ENCODE measurements at regions of chr14 and their contacts with region 1.

Region 1: GRCh38 chr14:89618811-89619551 is 201.9 kb upstream of the FOXN3 start:
- DNase-seq: peak; percentile 71
- H3K4me3 Mint-ChIP-seq: peak overlapping the region; percentile 94
- H3K27ac Mint-ChIP-seq: peak overlapping the region; percentile 97
- H3K4me1 Mint-ChIP-seq: peaks cover 63% of the 10 kb centered on the region
- H3K27me3 Mint-ChIP-seq: no peaks in the 10 kb centered on the region

Region 2: GRCh38 chr14:89178802-89179535 is 440.0 kb before region 1 on chr14:
- intact Hi-C with region 1: loop called (anchors 10 kb)
- DNase-seq: no peak
- H3K4me3 Mint-ChIP-seq: no peak overlapping the region
- H3K27ac Mint-ChIP-seq: no peak overlapping the region
- H3K4me1 Mint-ChIP-seq: peaks cover 4% of the 10 kb centered on the region
- H3K27me3 Mint-ChIP-seq: no peaks in the 10 kb centered on the region

Region 3: DNA sequence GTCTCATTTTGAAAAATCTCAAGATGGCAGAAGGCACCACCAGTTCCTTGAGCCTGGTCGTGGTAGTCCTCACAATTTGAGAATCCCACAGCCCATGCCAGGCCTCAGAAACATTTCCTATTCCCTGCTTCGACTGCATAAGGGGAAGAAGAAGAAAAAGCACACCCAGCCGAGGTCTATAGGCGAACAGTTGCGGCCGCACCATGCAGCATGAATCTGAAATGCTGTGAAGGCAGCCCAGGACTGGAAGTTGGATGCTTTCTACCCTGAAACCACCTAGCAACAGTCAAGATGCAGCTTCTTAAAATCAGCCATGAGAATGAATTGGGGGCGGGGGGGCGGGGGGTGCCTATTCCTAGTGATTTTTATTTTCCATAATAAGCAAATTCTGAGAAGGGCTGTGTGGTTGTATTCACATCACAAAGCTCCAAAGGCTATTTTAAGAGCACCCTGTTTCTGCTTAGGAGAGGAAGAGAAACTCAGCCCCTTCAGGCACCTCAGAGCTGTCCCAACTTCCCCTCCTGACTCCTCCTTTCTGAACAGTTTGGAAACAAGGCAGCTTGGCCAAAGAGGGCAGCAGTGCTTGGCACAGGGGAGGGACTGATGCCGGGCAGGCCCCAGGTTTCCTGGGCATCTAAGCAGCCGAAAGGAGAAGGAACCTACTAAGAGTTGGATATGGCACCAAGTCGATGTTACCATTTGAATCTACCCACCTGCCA is 29.4 kb before region 1 on chr14:
- intact Hi-C with region 1: loop called (anchors 2 kb)
- DNase-seq: no peak
- H3K4me3 Mint-ChIP-seq: no peak overlapping the region
- H3K27ac Mint-ChIP-seq: peak overlapping the region; percentile 36
- H3K4me1 Mint-ChIP-seq: peaks cover 59% of the 10 kb centered on the region
- H3K27me3 Mint-ChIP-seq: no peaks in the 10 kb centered on the region

Region 4: DNA sequence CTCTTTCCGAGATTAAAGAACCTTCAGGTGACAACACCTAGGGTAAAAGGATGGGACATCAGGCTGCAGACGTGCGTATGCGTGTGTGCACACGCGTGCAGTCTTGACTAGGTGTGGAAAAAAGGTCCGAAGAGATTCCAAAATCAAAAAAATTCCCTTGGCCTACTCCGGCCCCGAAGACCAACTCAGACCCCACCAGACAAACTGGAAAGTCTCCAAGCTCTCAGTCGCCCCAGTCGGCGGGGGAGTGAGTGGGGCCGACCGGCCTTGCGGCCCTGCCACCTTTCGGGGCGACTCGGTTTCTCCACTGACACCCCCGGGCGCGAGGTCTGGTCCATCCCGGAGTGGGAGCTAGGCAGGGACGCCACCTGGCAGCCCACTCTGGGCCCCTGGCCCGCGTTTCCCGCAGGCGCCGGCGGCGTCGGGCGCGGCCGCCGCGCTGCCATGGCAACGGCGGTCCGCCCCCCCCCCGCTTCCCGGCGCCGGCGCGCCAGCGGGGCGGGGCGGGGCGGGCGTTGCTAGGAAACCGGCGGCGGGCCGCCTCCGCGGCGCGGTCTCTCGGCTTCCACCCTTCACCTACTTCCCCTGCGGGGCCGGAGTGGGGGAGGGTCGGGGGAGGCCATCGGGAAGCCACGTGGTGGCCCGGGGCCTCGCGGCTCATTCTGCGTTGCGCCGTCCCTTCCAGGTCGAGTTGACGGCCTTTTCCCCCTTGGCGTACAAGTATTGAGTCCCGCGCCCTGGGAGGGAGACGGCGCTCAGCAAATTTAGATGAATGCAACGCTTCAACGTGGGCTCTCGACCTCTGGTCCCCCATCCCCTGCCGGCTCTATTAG is 82.4 kb after region 1 on chr14:
- intact Hi-C with region 1: loop called (anchors 5 kb)
- DNase-seq: peak; percentile 81
- H3K4me3 Mint-ChIP-seq: peak overlapping the region; percentile 57
- H3K27ac Mint-ChIP-seq: peak overlapping the region; percentile 79
- H3K4me1 Mint-ChIP-seq: peaks cover 43% of the 10 kb centered on the region
- H3K27me3 Mint-ChIP-seq: no peaks in the 10 kb centered on the region

Region 5: GRCh38 chr14:89767861-89768268 is 148.9 kb after region 1 on chr14:
- intact Hi-C with region 1: loop called (anchors 2 kb)
- DNase-seq: peak; percentile 60
- H3K4me3 Mint-ChIP-seq: no peak overlapping the region
- H3K27ac Mint-ChIP-seq: peak overlapping the region; percentile 82
- H3K4me1 Mint-ChIP-seq: peaks cover 24% of the 10 kb centered on the region
- H3K27me3 Mint-ChIP-seq: peaks cover 6% of the 10 kb centered on the region

Region 6: DNA sequence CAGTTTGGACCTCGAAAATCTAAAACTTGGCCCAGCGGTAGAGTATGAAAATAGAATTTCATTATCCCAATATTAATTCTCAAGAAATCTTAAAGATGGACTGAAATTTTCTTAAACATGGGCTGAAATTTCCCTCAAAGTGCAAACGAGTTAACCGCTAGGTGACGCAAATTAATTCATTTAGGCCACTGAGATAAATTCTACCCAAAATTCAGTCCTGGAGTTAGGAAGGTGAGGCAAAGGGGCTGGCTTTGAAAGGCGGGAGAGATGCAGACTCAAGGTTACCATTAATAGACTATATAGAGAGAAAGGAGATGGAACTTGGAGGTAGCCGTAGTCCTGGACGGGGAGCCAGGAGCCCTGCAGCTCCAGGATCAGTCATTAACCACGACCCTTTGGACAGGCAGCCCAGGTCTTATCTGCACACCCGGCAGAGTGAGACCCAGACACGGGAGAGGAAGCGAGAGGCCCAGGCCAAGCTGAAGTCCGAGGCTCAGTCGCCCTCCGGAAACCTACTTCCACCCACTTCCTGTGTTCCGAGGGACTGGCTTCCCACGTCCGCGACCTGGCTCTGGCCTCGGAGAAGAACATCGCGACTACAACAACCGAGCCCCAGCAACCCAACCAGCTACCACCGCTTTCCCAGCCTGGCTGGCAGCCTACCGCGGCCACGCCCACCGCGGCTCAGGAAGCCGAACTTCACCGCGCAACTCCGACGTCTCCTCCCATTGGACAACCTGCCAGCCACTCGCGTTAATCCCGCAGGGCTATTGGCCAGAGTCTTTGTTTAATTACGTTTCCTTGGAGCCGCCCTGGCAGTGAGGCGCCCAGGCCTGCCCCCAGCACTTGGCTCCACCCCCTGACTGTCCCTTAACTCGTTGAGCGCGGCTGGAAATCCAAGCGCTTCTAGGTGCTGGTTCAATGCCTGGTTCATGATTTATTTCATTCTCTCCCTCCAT is 335.4 kb after region 1 on chr14 and contains the start of gene EFCAB11:
- intact Hi-C with region 1: loop called (anchors 5 kb)
- DNase-seq: peak; percentile 96
- H3K4me3 Mint-ChIP-seq: peak within 1 kb of the TSS; percentile 87
- H3K27ac Mint-ChIP-seq: peak within 1 kb of the TSS; percentile 81
- H3K4me1 Mint-ChIP-seq: peaks cover 43% of the 10 kb centered on the region
- H3K27me3 Mint-ChIP-seq: no peaks in the 10 kb centered on the region
- total RNA-seq, gene EFCAB11: 7.1 and 9.0 TPM in 2 replicates